Right ventricle myocardium inferior (tissue), 1 donor: ENCODE measurements at regions of chr12 and their contacts with region 1.

Region 1: DNA sequence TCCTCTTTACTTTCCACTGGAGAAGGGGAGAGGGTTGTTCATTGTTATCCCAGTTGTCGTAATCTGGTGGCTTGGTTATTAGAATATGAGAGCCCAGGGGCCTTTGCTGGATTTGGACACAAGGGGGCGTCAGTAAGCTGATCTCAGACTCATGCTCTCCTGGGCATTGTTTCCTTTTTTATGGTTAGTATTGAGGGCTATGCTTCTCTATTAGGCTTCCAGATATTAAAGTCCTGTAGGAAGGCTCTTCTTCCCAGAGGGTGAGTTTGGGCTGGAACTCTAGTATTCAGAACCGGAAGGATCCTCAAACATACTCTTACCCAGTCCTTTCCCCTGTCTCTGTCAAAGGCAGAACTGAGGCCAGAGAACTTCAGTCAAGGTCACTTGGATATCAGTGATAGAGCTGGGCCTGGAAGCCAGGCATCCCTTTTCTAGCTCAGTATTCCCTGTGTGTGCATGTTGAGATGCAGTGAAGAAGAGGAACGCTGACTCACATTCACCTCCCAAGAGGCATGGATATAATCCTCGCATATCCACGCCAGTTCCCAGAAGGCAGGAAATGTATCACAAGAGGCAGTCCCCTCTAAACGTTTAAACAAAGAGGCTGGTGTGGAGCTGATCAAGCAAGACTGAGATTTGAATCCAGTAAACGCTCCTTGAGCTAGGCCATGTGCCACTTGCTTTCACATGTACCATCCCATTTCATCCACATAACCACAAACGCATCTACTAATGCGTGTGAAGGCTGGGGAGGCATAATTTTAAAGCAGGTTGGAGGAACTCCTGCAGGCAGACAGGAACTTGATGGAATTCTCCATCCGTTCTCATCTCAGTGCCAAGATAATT is 41.6 kb downstream of the UBE3B start:
- DNase-seq: no peak
- ATAC-seq: peak; percentile 42

Region 2: GRCh38 chr12:109264095-109264942 is 254.7 kb before region 1 on chr12:
- intact Hi-C with region 1: no loop called
- DNase-seq: no peak
- ATAC-seq: peak; percentile 49

Region 3: GRCh38 chr12:109428037-109428629 is 90.9 kb before region 1 on chr12:
- intact Hi-C with region 1: loop called (anchors 2 kb)
- DNase-seq: peak; percentile 91
- ATAC-seq: peak; percentile 90

Region 4: DNA sequence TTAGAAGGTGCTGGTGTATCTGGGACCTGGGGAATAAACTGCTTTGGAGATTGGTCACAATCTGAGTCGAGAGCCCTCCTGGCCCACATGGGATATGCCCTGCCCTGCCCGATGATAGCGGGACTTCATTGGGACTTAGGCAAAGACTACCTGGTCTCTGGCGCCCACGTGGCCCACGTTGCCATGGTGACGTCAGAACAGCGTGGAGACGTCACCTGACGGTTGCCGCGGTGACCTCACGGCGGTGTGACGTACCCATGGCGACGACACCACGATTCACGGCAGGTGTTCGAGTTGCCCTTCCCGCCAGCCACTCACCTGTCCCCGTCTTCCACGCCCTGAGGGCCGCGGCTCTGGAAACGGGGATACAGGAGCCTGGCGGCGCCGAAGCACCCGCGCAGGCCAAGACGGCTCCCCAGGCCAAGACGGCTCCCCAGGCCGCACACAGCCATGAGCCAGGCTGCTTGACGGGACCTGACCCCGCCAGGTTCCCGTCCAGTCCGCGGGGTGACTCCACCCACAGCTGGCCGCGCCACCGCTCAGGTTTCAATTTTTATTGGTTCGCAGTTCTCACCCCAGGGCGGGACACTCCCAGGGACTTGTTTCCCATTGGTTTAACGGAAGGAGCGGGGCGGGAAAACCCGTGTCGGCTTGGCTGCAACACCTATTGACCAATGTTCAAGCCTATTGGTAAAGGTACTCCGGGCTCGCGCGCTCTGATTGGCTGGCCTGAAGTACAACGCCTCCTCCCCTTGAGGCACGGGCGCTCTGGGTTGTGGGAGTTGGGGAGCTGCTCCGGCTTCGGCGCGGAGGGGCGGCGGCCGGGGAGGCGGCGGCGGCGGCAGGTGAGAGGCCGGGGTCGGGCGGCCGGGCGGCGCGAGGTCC is 54.2 kb after region 1 on chr12 and contains the starts of genes MMAB and MVK:
- intact Hi-C with region 1: loop called (anchors 5 kb)
- DNase-seq: peak; percentile 99
- ATAC-seq: peak; percentile 98
- total RNA-seq, gene MMAB: 61.7 TPM
- total RNA-seq, gene MVK: 11.8 TPM

Region 5: DNA sequence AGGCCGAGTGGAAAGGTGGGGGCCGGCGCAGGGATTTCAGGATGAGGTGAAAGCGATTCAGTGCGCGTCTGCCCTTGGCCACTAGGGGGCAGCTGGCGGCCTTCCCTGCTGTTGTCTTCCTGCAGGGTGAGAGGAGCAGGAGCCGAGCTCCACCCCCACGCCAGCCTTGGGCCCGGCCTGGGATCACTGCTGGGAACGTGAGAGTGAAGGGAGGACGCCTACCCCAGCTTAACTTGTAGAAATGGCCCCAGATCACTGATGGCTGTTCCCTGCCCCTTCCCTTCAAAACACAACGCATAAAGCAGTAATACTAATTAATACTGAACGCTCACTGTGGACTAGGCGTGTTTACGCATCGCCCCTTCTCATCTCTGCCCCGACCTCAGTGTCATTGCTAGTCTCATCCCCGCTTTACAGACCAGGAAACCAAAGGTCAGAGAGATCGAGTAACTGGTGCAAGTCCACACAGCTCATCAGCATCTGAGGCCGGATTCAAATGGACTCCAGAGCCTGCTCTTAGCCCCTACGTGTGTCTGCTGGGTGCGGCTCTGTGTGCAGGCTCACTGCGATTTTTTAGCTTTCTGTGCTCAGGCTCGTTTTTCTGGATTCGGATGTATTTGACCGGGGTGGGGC is 78.9 kb after region 1 on chr12:
- intact Hi-C with region 1: loop called (anchors 5 kb)
- DNase-seq: peak; percentile 94
- ATAC-seq: peak; percentile 90

Region 6: GRCh38 chr12:109713187-109713984 is 194.3 kb after region 1 on chr12 and contains the start of gene FAM222A:
- intact Hi-C with region 1: loop called (anchors 2 kb)
- DNase-seq: peak; percentile 97
- ATAC-seq: peak; percentile 97
- total RNA-seq, gene FAM222A: 27.4 TPM

Region 7: GRCh38 chr12:109775172-109775881 is 256.3 kb after region 1 on chr12:
- intact Hi-C with region 1: loop called (anchors 1 kb)
- DNase-seq: peak; percentile 84
- ATAC-seq: peak; percentile 82

Region 8: GRCh38 chr12:109844983-109845823 is 326.2 kb after region 1 on chr12:
- intact Hi-C with region 1: loop called (anchors 1 kb)
- DNase-seq: peak; percentile 96
- ATAC-seq: peak; percentile 95